ENCODE measurements at regions of chr14 and their contacts with region 1.

Region 1: GRCh38 chr14:35404449-35405303 is at the start of gene NFKBIA:
- DNase-seq: peak; percentile 88
- ATAC-seq: peak; percentile 82
- H3K4me3 ChIP-seq: peak within 1 kb of the TSS; percentile 95
- H3K27ac ChIP-seq: peak within 1 kb of the TSS; percentile 99
- H3K4me1 ChIP-seq: peaks cover 15% of the 10 kb centered on the region
- H3K27me3 ChIP-seq: no peaks in the 10 kb centered on the region
- CTCF ChIP-seq: peak; percentile 57
- POLR2A ChIP-seq: peak; percentile 99
- RAD21 ChIP-seq: peak; percentile 38
- total RNA-seq, gene NFKBIA: 97.1 and 102 TPM in 2 replicates

Region 2: GRCh38 chr14:34665785-34666435 is 738.8 kb before region 1 on chr14:
- CTCF ChIA-PET with region 1: no interaction called
- POLR2A ChIA-PET with region 1: no interaction called
- dilution Hi-C with region 1: no loop called
- in situ Hi-C with region 1: loop called (anchors 25 kb)
- intact Hi-C with region 1: no loop called
- DNase-seq: peak; percentile 96
- ATAC-seq: peak; percentile 84
- H3K4me3 ChIP-seq: no peak overlapping the region
- H3K27ac ChIP-seq: peak overlapping the region; percentile 55; the same call in 1 of the 2 replicates
- H3K4me1 ChIP-seq: peaks cover 3% of the 10 kb centered on the region; the same call in 1 of the 2 replicates
- H3K27me3 ChIP-seq: no peaks in the 10 kb centered on the region
- CTCF ChIP-seq: no peak
- POLR2A ChIP-seq: no peak
- RAD21 ChIP-seq: no peak

Region 3: GRCh38 chr14:35215110-35215876 is 189.4 kb before region 1 on chr14:
- CTCF ChIA-PET with region 1: interaction called, 9 read pairs
- POLR2A ChIA-PET with region 1: no interaction called
- dilution Hi-C with region 1: no loop called
- in situ Hi-C with region 1: loop called (anchors 5 kb)
- intact Hi-C with region 1: loop called (anchors 1 kb)
- DNase-seq: peak; percentile 80
- ATAC-seq: peak; percentile 83
- H3K4me3 ChIP-seq: no peak overlapping the region
- H3K27ac ChIP-seq: no peak overlapping the region
- H3K4me1 ChIP-seq: peaks cover 7% of the 10 kb centered on the region
- H3K27me3 ChIP-seq: no peaks in the 10 kb centered on the region
- CTCF ChIP-seq: peak; percentile 84
- POLR2A ChIP-seq: no peak
- RAD21 ChIP-seq: peak; percentile 70

Region 4: GRCh38 chr14:35304812-35305462 is 99.7 kb before region 1 on chr14:
- CTCF ChIA-PET with region 1: no interaction called
- POLR2A ChIA-PET with region 1: no interaction called
- dilution Hi-C with region 1: no loop called
- in situ Hi-C with region 1: no loop called
- intact Hi-C with region 1: loop called (anchors 5 kb)
- DNase-seq: no peak
- ATAC-seq: no peak
- H3K4me3 ChIP-seq: no peak overlapping the region
- H3K27ac ChIP-seq: no peak overlapping the region
- H3K4me1 ChIP-seq: peaks cover 5% of the 10 kb centered on the region
- H3K27me3 ChIP-seq: no peaks in the 10 kb centered on the region
- CTCF ChIP-seq: no peak
- POLR2A ChIP-seq: no peak
- RAD21 ChIP-seq: no peak

Region 5: GRCh38 chr14:35374273-35374681 is 30.4 kb before region 1 on chr14:
- CTCF ChIA-PET with region 1: no interaction called
- POLR2A ChIA-PET with region 1: no interaction called
- dilution Hi-C with region 1: no loop called
- in situ Hi-C with region 1: no loop called
- intact Hi-C with region 1: loop called (anchors 1 kb)
- DNase-seq: peak; percentile 98
- ATAC-seq: peak; percentile 82
- H3K4me3 ChIP-seq: no peak overlapping the region
- H3K27ac ChIP-seq: peak overlapping the region; percentile 84
- H3K4me1 ChIP-seq: peaks cover 2% of the 10 kb centered on the region
- H3K27me3 ChIP-seq: no peaks in the 10 kb centered on the region
- CTCF ChIP-seq: no peak
- POLR2A ChIP-seq: no peak
- RAD21 ChIP-seq: no peak

Region 6: DNA sequence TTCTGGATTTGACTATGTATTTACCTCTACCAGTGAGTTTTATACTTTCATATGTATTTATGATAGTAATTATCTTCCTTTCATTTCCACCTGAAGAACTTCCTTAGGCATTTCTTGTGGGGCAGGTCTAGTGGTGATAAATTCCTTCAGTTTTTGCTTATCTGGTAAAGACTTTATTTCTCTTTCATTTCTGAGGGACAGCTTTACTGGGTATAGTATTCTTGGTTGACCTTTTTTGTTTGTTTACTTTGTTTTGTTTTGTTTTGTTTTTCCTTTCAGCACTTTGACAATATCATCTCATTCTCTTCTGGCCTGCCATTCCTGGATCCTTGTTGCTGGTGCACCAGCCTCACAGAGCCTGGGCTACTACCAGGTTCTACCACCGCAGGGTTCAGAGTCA is 53.8 kb after region 1 on chr14:
- CTCF ChIA-PET with region 1: no interaction called
- POLR2A ChIA-PET with region 1: no interaction called
- dilution Hi-C with region 1: no loop called
- in situ Hi-C with region 1: no loop called
- intact Hi-C with region 1: no loop called
- DNase-seq: no peak
- ATAC-seq: no peak
- H3K4me3 ChIP-seq: no peak overlapping the region
- H3K27ac ChIP-seq: no peak overlapping the region
- H3K4me1 ChIP-seq: no peaks in the 10 kb centered on the region
- H3K27me3 ChIP-seq: no peaks in the 10 kb centered on the region
- CTCF ChIP-seq: no peak
- POLR2A ChIP-seq: no peak
- RAD21 ChIP-seq: no peak

Region 7: DNA sequence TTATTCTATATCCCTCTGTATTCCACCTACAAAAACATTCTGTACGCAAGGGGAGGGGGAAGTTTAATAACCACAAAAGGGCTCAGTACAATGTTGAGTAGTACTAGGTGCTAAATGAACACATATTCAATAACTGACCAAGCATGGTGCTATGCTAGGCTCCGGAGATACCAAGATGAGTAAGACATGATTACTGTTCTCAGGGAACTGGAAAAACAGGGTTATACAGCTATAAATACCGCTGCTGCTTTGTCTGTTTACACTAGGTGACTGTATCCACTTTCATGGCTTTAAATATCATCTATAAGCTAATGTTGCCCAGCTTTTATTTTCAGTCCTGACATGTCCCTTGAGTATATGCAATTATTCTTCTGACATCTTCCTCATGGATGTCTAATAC is 265.1 kb after region 1 on chr14:
- CTCF ChIA-PET with region 1: no interaction called
- POLR2A ChIA-PET with region 1: no interaction called
- dilution Hi-C with region 1: no loop called
- in situ Hi-C with region 1: no loop called
- intact Hi-C with region 1: no loop called
- DNase-seq: peak; percentile 87
- ATAC-seq: peak; percentile 99
- H3K4me3 ChIP-seq: no peak overlapping the region
- H3K27ac ChIP-seq: no peak overlapping the region
- H3K4me1 ChIP-seq: 0 out of 2 replicates have a peak, but pooled peaks cover 1% of the 10 kb centered on the region
- H3K27me3 ChIP-seq: no peaks in the 10 kb centered on the region
- CTCF ChIP-seq: no peak
- POLR2A ChIP-seq: no peak
- RAD21 ChIP-seq: no peak

Region 8: DNA sequence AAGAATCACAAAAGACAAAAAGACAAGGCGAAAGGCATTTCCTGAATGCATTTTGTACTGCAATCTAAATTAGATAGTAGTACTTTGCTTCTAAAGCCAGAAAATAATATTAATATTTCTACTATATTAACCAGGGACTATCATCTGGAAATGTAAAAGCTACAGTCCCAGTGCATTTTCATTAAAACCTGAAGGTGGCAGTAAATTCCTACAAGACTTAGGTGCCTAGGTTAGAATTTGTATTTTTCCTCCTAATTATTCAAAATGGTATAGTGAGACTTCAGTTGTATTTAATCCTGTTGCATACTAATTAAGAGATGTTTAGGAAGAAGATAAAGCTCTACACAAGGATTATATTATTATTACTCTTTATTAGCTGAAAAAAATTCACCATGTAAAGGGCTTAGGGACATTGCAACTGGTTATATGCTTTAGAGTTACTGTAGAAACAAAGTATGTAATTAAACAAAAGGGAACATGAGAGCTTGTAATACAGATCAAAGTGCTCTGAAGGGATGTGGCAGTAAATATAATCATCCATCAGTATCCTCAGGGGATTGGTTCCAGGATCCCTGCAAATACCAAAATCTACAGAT is 475.1 kb after region 1 on chr14:
- CTCF ChIA-PET with region 1: no interaction called
- POLR2A ChIA-PET with region 1: no interaction called
- dilution Hi-C with region 1: no loop called
- in situ Hi-C with region 1: no loop called
- intact Hi-C with region 1: no loop called
- DNase-seq: peak; percentile 20
- ATAC-seq: no peak
- H3K4me3 ChIP-seq: no peak overlapping the region
- H3K27ac ChIP-seq: no peak overlapping the region
- H3K4me1 ChIP-seq: peaks cover 2% of the 10 kb centered on the region
- H3K27me3 ChIP-seq: no peaks in the 10 kb centered on the region
- CTCF ChIP-seq: peak; percentile 51
- POLR2A ChIP-seq: no peak
- RAD21 ChIP-seq: peak; percentile 48

Measured in IMR-90 (cell line).